HEK293T (cell line): ENCODE measurements at regions of chr1 and their contacts with region 1.

Region 1: DNA sequence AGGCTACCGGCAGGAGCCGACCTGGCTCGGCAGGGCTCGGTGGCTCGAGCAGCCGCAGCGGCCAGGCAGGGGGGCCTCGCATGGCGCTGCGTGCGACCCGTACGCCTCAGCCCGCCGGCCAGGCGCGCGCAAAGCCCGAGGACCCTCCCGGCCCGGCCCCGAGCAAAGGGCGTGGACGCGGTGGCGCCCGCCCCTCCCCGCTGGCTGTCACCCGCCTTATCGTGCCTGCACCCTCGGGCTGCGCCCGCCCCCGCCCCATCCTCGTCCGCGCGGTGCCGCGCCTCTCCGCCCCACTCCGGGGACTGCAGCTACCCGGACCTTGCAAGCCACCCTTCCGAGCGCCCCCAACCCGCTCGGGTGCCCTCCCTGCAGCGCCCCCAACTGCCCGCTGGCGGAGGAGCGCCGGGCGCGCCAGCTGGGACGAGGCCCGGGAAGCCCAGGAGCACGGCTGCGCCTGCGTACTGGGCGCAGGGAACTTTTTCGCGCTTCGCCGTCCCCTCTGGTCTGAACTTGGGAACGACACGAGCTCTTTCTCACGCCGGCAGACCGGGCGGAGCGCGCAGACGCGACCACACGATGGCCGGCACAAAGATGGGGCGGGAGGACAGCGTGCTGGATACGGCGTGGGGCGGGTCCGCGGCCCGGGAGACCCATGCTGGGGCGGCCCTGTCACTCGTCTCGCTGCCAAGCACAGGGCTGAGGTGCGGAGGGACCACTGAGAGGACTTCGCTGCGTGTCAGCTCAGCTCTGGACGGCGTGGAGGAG is at the start of gene ABCB10:
- DNase-seq: peak; percentile 99

Region 2: GRCh38 chr1:229507951-229508822 is 50.6 kb before region 1 on chr1 and contains the start of gene NUP133:
- CTCF ChIA-PET with region 1: no interaction called
- POLR2A ChIA-PET with region 1: interaction called, 33 read pairs
- DNase-seq: peak; percentile 99

Region 3: DNA sequence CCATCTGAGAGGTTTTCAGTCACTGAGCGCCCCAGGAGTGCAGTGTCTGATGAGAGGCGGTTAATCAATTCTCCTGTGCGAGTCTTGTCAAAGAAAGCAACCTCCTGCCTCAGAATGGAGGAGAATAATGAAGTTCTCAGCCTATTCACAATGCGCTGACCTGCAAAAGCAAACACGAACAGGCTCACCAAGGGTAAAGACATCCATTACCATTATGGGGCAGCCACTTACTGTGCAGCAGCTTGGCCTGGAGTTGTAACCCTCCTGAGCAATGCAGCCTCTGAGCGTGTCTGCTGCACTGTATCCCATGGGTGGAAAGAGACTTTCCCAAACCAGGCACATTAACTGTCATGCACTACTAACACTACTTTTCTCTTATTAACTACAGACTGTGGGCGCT is 11.2 kb before region 1 on chr1:
- CTCF ChIA-PET with region 1: interaction called, 3 read pairs
- POLR2A ChIA-PET with region 1: interaction called, 12 read pairs
- DNase-seq: no peak

Region 4: GRCh38 chr1:229620876-229621275 is 62.1 kb after region 1 on chr1:
- CTCF ChIA-PET with region 1: interaction called, 9 read pairs
- POLR2A ChIA-PET with region 1: interaction called, 52 read pairs
- DNase-seq: no peak

Region 5: DNA sequence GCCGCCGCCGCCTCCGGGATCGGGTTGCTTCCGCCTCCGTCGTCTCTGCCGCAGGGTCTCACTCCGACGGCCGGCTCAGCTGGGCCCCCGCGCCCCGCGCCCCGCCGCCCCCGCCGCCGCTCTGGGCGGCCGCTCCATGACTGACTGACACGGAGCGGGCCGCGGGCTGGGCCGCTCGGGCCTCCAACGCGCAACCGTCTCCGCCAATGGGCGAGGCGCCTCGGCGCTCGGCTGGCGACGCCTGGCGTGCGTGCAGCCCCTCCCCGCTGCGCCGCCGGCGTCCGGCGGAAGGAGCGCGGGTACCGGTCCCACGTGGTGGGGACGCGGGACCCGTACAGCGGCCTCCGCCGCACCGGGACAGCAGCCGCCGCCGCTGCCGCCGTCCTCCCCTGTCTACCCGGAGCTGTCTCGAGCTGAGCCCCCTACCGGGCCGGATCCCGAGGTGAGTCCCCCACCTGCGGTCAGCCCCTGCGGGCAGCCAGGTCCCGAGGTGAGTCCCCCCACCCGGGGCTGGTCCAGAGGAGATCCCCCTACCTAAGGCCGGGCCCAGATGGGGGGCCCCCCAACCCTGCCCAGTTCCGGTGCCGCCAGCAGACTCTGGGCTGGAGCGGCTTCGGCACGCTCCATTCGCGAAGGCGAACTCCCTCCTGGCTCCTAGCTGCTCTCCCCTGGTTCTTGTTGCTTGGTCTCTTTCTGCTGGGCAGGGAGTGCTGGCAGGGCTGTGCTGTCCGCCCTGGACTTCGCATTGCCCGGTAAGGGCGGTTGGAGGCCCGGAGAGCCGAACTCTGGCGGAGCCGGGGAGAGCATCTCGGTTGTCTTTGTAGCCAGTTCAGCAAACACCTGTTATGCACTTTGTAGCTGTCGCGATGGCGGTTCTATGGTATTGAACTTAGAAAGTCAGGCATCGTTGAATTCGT is 67.4 kb after region 1 on chr1 and contains the starts of genes TAF5L and URB2:
- CTCF ChIA-PET with region 1: interaction called, 9 read pairs
- POLR2A ChIA-PET with region 1: interaction called, 52 read pairs
- DNase-seq: peak; percentile 98

Region 6: GRCh38 chr1:229693129-229693900 is 134.6 kb after region 1 on chr1:
- CTCF ChIA-PET with region 1: no interaction called
- POLR2A ChIA-PET with region 1: no interaction called
- DNase-seq: peak; percentile 6